Colonic mucosa (tissue), 4 donors: ENCODE measurements at regions of chr3 and their contacts with region 1.

Region 1: GRCh38 chr3:124995460-124995994 is 60.3 kb downstream of the HEG1 start:
- DNase-seq: peak; percentile 54
- H3K4me3 ChIP-seq: no peak overlapping the region
- H3K27ac ChIP-seq: no peak overlapping the region
- H3K4me1 ChIP-seq: peaks cover 3% of the 10 kb centered on the region
- H3K27me3 ChIP-seq: no peaks in the 10 kb centered on the region
- CTCF ChIP-seq: peak; percentile 58

Region 2: DNA sequence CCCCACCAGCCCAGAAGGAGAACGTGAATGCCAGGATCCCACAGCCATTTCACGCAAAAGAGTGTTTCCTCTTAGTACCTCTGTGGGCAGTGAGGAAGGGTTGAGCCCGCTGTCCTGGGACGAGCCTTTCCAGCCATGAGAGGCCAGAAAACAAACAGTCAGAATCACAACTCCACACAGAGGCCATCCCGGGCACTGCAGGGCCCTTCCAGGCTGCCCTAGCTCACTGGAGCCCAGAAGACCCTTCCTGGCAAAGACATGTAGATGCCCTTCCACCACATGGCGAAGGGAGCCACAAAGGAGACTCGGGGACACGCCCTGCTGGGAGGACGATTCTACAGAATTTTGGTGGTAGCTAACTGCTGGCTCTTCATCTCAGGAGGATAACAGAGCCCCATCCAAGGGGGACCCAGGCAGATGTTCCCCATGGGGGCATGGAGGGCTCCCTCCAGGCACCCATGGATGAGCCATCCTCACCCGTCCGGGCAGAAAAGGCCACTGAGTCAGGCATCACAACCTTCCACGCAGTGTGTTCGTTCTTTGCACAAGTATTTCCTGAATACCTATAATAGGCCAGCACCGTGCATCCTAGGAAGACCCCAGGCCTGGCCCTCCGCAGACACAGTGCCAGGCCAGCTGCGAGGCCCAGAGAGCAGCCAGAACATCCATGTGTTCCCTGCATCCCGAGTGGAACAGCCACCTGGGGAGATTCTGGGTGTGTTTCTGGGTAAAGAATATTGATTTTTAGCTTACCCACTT is 169.8 kb after region 1 on chr3:
- intact Hi-C with region 1: loop called (anchors 10 kb)
- DNase-seq: no peak
- H3K4me3 ChIP-seq: no peak overlapping the region
- H3K27ac ChIP-seq: peak overlapping the region; percentile 74
- H3K4me1 ChIP-seq: peaks cover 11% of the 10 kb centered on the region
- H3K27me3 ChIP-seq: no peaks in the 10 kb centered on the region
- CTCF ChIP-seq: peak; percentile 41

Region 3: DNA sequence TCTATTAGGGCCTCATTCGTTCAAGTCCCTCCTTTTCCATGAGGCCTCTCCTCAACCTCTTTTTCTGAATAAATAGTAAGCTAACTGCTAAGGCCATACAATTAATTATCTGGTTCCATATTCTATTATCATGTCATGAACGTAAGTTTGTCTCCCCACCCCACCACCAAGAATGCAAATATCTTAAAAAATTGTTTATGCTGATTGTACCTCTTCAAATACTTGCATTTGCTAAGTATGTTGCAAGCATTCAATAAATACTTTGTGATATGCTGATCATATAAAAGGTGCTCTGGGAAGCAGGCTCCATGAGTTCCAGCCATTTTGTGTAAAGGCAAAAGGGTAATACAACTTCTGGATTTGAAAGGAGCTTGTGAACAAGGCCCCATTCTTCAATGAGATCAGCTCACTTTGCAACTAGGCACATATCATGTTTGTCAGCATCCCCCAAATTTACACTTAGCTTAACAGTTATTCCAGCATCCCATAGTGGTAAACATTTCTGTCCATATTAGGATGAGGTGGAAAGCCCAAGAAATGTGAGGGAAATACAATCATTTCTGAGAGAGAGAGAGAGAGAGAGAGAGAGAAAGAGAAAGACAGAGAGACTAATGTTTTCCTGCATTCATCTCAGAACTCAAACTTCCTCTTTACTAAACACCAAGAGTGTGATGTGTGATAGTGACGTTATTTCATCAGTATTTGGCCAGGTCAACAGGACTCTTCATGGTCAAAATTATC is 183.8 kb after region 1 on chr3:
- intact Hi-C with region 1: no loop called
- DNase-seq: no peak
- H3K4me3 ChIP-seq: no peak overlapping the region
- H3K27ac ChIP-seq: no peak overlapping the region
- H3K4me1 ChIP-seq: no peaks in the 10 kb centered on the region
- H3K27me3 ChIP-seq: no peaks in the 10 kb centered on the region
- CTCF ChIP-seq: no peak